Esophagus muscularis mucosa (tissue), 4 donors: ENCODE measurements at regions of chr18 and their contacts with region 1.

Region 1: GRCh38 chr18:63320046-63320689 is 599 bp upstream of the BCL2 start:
- DNase-seq: peak; percentile 94
- H3K4me3 ChIP-seq: peak overlapping the region; percentile 69 to 92 (median 78)
- H3K27ac ChIP-seq: peak overlapping the region; percentile 88 to 93 (median 92)
- H3K4me1 ChIP-seq: peaks cover 15 to 62% (median 50%) of the 10 kb centered on the region in 4 donors
- H3K27me3 ChIP-seq: peaks cover 0 to 4% (median 0%) of the 10 kb centered on the region in 4 donors
- CTCF ChIP-seq: peak in 1 of 3 experiments; percentile 14
- EP300 ChIP-seq: no peak
- POLR2A ChIP-seq: no peak

Region 2: GRCh38 chr18:63016270-63016669 is 303.9 kb before region 1 on chr18:
- intact Hi-C with region 1: loop called (anchors 2 kb)
- DNase-seq: no peak
- H3K4me3 ChIP-seq: no peak overlapping the region
- H3K27ac ChIP-seq: no peak overlapping the region
- H3K4me1 ChIP-seq: no peaks in the 10 kb centered on the region
- H3K27me3 ChIP-seq: no peaks in the 10 kb centered on the region
- CTCF ChIP-seq: peak; percentile 68 to 79 (median 75)
- EP300 ChIP-seq: no peak
- POLR2A ChIP-seq: no peak

Region 3: DNA sequence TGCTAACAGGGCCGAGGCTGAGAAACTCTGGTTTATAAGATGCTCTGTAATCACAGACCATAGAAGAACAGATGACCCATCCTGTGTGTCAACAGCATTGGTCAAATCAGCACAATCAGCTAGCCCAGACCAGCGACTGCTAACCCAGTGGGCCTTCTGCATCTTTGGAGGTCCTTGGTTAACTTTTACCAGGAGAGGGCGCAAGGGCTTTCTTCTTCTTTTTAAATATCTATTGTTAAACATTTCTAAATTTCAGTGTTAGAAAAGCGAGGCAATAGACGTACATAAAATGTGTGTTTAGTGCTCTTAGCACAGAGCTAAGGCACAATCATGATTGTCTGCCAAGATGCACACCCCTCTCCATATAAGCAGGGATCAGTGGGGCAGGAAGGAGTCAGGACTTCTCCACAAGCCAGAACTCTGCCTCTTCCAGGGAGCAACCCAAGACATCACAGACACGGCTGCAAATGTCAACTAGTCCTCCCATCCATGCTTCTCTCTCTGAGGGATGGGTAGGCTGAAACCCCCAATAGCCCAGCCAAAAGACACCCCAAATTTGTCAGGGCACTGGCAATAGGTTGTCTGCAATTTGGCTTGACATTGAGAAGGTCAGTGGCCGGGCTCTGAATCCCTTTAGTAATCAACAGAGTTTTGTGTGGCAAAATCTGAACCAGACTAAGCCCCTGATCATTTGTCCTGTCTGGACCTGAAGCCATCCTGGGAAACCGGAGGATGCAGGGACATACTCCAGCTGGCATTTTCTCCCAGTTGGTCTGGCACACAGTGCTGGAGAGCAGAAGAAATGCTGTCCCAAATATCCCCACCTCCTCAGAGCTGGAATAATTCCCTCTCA is 188.8 kb before region 1 on chr18:
- intact Hi-C with region 1: loop called (anchors 2 kb)
- DNase-seq: no peak
- H3K4me3 ChIP-seq: peak overlapping the region in 1 of 4 donors; percentile 9
- H3K27ac ChIP-seq: peak overlapping the region; percentile 39 to 64 (median 58)
- H3K4me1 ChIP-seq: peaks cover 10 to 24% (median 23%) of the 10 kb centered on the region in 4 donors
- H3K27me3 ChIP-seq: no peaks in the 10 kb centered on the region
- CTCF ChIP-seq: peak; percentile 68 to 75 (median 71)
- EP300 ChIP-seq: no peak
- POLR2A ChIP-seq: no peak

Region 4: GRCh38 chr18:63155169-63155852 is 164.9 kb before region 1 on chr18:
- intact Hi-C with region 1: loop called (anchors 5 kb)
- DNase-seq: no peak
- H3K4me3 ChIP-seq: peak overlapping the region in 3 of 4 donors; percentile 6 to 46 (median 23)
- H3K27ac ChIP-seq: no peak overlapping the region
- H3K4me1 ChIP-seq: peaks cover 11 to 41% (median 38%) of the 10 kb centered on the region in 4 donors
- H3K27me3 ChIP-seq: no peaks in the 10 kb centered on the region
- CTCF ChIP-seq: peak; percentile 46 to 72 (median 58)
- EP300 ChIP-seq: no peak
- POLR2A ChIP-seq: no peak

Region 5: DNA sequence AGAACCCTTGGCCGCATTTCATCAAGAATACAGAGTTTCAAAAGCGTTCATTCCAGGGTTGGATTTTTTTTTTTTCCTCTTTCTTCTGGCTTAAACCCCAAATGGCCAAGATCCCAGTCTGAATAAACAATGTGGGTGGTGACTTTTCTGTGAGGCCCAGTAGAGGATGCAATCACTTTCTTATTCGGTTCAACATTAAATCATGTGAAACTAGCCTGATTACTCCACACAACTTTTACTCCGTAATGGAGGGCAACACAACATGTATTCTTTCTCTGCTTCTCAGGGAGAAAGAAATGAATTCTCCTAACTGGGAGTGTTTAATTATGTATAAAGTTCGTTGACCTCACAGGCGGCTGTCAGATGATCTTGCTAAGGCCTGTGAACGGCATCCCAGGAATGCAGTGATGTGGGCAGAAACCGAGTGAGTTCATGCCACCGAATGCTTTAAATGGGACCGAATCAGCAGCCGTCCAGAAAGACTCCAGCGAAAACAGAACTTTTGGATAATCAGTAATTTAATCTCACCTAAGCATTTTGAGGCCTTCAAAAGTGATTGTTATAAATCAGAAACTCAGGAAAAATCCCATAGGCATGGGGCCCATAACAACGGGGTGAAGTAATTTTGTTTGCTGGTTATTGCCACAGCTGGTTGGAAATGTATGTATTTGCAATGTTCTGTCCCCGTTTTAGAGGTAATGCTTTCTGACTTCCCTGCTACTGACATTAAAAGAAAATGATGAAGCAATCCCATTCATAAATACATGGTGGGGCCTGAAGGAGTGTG is 82.1 kb before region 1 on chr18:
- intact Hi-C with region 1: loop called (anchors 5 kb)
- DNase-seq: peak; percentile 79
- H3K4me3 ChIP-seq: peak overlapping the region; percentile 7 to 39 (median 20)
- H3K27ac ChIP-seq: peak overlapping the region; percentile 85 to 90 (median 86)
- H3K4me1 ChIP-seq: peaks cover 20 to 41% (median 37%) of the 10 kb centered on the region in 4 donors
- H3K27me3 ChIP-seq: no peaks in the 10 kb centered on the region
- CTCF ChIP-seq: peak in 1 of 3 experiments; percentile 7
- EP300 ChIP-seq: no peak
- POLR2A ChIP-seq: no peak

Region 6: DNA sequence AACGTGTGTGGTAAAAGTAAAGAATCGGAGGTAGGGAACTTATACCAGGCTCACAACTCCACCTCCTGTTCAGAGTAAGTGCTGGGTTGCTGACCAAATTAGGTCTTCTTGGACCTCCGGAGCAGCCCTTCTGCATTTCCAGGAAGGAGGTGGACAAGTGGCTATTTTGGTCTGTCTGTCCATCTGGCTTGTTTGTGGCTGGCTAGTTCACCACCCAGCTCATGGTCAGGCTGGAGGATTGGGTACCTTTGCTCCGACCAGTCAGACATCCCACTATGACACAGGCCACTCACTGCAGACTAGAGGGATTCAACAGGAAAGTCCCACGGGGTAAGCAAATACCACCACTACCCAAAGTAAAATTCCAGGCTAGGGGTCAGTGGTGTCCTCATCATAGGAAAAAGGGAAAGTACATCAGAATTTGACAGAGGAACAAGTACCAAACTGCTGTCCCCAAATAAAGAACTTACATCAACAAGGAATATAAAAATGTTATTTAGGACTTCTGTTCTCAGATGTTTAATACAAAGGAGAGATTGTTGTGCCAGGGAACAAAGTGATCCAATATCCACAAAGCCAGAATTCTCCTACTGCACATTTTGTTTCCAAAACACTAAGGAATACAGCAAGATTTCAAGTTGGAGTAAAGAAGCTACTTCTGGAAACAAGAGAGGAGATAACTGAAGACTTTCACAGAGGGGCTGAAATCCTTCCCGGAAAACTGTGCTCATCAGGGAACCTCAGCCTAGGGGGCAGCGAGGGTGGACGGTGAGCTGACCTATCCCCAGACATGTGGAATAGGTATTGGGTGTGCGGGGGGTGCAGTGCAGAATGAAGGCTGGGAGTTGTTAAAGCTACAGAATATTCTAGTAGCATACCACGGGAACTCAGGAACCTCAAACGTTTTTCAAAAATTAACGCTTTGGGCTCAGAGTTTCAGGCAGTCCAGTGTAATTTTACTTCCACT is 57.5 kb before region 1 on chr18:
- intact Hi-C with region 1: loop called (anchors 2 kb)
- DNase-seq: no peak
- H3K4me3 ChIP-seq: peak overlapping the region; percentile 24 to 44 (median 27)
- H3K27ac ChIP-seq: peak overlapping the region; percentile 84 to 89 (median 87)
- H3K4me1 ChIP-seq: peaks cover 21 to 79% (median 77%) of the 10 kb centered on the region in 4 donors
- H3K27me3 ChIP-seq: no peaks in the 10 kb centered on the region
- CTCF ChIP-seq: peak; percentile 28 to 45 (median 41)
- EP300 ChIP-seq: peak; percentile 60
- POLR2A ChIP-seq: no peak

Region 7: GRCh38 chr18:63505566-63506335 is 185.6 kb after region 1 on chr18:
- intact Hi-C with region 1: no loop called
- DNase-seq: no peak
- H3K4me3 ChIP-seq: no peak overlapping the region
- H3K27ac ChIP-seq: no peak overlapping the region
- H3K4me1 ChIP-seq: no peaks in the 10 kb centered on the region
- H3K27me3 ChIP-seq: no peaks in the 10 kb centered on the region
- CTCF ChIP-seq: peak in 1 of 3 experiments; percentile 24
- EP300 ChIP-seq: no peak
- POLR2A ChIP-seq: no peak